Naive thymus-derived CD8-positive, alpha-beta T cell (primary cell): ENCODE measurements at regions of chr2 and their contacts with region 1.

Region 1: DNA sequence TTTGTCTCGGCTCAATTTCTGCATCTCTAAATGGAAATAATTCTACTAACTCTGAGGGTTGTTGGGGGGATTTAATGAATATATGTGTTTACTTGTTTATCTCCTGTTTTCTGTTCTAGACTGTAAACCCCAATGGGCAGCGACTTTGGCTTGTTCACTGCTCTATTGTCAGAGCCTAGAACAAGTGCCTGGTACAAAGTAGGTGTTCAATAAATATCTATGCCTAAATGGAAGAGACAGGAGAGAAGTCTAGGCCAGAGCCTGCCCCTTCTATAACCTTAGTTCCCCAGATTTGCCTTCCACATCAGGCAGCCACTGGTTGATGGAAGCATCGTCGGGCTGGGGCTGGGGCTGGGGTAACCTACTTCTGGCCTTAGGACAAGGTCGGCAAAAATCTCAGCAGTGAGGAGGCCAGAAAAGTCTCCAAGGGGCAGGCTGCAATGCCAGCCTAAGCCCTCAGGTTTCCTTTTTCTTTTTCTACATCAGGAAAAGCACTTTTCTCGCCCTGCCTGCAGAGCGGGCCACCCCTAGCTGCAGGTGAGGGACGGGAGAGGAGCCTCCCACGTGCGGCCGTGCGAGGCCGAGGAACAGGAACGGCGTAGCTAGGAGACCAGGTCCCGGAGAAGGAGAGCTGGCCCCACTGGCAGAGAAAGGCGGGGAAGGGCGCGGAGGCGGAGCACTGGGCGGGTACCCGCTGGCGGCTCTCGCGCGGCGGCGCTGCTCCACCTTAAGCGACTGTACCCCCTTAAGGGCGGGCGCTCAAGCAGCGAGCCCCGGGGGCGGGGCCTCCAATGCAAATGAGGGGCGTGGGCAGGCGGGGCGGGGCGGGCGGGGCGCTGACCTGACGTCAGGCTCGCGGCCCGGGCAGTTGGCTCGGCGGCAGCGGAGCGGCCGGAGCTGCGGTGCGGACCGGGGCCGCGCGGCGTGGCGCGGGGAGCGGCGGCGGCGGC is at the start of gene CNNM4:
- DNase-seq: peak; percentile 81 to 96 (median 90)
- ATAC-seq: peak; percentile 92 to 94
- H3K4me3 Mint-ChIP-seq: peak within 1 kb of the TSS; percentile 76 to 95 (median 91)
- H3K27ac Mint-ChIP-seq: peak within 1 kb of the TSS; percentile 78 to 95 (median 92)
- H3K4me1 Mint-ChIP-seq: peaks cover 23 to 55% (median 51%) of the 10 kb centered on the region in 4 donors
- H3K27me3 Mint-ChIP-seq: no peaks in the 10 kb centered on the region
- polyA plus RNA-seq, gene CNNM4: 0.63 to 2.2 (median 1.3) TPM

Region 2: GRCh38 chr2:96730212-96730611 is 30.1 kb before region 1 on chr2:
- POLR2A ChIA-PET with region 1: no interaction called
- DNase-seq: no peak
- ATAC-seq: no peak
- H3K4me3 Mint-ChIP-seq: no peak overlapping the region
- H3K27ac Mint-ChIP-seq: peak overlapping the region in 2 of 10 donors; percentile 17 to 56
- H3K4me1 Mint-ChIP-seq: peaks cover 0 to 9% (median 3%) of the 10 kb centered on the region in 4 donors
- H3K27me3 Mint-ChIP-seq: no peaks in the 10 kb centered on the region

Region 3: DNA sequence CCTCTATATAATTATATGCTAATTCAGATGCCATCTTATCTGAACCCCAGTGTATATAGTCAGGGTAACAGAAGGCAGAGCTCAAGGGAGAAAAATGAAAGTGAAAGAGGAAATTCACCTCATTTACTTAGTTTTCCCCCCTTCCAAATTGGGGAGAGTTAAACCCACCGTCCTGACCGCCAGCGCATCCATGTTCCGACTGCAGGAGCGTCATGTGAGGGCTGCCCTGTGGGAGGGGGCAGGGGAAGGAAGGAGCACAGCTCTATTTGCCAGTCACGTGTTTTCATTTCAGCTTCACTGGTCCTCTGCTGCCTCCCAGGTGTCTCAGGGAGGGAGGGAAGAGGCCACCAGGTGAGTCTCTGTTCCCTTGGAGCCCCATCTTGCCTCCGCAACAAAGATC is 13.6 kb after region 1 on chr2:
- POLR2A ChIA-PET with region 1: interaction called, 14 read pairs
- DNase-seq: peak; percentile 25 to 74 (median 54)
- ATAC-seq: peak; percentile 85 to 88
- H3K4me3 Mint-ChIP-seq: peak overlapping the region; percentile 86 to 95 (median 91)
- H3K27ac Mint-ChIP-seq: peak overlapping the region; percentile 90 to 98 (median 94)
- H3K4me1 Mint-ChIP-seq: peaks cover 13 to 31% (median 21%) of the 10 kb centered on the region in 4 donors
- H3K27me3 Mint-ChIP-seq: no peaks in the 10 kb centered on the region

Region 4: DNA sequence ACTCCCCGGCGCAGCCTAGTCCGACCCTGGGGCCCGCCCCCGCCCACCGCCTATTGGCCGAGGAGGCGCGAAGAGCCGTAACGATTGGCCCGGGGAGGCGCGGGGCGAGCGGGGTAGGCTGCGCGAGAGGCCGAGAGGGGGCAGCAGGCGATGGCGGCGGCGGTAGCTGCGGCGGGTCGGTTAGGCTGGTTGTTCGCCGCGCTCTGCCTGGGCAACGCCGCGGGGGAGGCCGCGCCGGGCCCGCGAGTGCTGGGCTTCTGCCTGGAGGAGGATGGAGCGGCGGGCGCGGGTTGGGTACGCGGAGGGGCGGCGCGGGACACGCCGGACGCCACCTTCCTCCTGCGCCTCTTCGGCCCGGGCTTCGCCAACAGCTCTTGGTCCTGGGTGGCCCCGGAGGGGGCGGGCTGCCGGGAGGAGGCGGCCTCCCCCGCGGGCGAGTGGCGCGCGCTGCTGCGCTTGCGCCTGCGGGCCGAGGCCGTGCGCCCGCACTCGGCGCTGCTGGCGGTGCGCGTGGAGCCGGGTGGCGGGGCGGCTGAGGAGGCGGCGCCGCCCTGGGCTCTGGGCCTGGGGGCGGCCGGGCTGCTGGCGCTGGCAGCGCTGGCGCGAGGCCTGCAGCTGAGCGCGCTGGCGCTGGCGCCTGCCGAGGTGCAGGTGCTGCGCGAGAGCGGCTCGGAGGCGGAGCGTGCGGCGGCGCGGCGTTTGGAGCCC is 56.0 kb after region 1 on chr2 and contains the start of gene CNNM3:
- POLR2A ChIA-PET with region 1: interaction called, 13 read pairs
- DNase-seq: peak; percentile 88 to 96 (median 94)
- ATAC-seq: peak; percentile 90 to 93
- H3K4me3 Mint-ChIP-seq: peak within 1 kb of the TSS; percentile 84 to 98 (median 89)
- H3K27ac Mint-ChIP-seq: peak within 1 kb of the TSS in 9 of 10 donors; percentile 78 to 94 (median 85)
- H3K4me1 Mint-ChIP-seq: peaks cover 36 to 58% (median 56%) of the 10 kb centered on the region in 4 donors
- H3K27me3 Mint-ChIP-seq: no peaks in the 10 kb centered on the region
- polyA plus RNA-seq, gene CNNM3: 2.8 to 12.0 (median 11.4) TPM